Heart right ventricle (tissue), 16 donors: ENCODE measurements at regions of chr2 and their contacts with region 1.

Region 1: DNA sequence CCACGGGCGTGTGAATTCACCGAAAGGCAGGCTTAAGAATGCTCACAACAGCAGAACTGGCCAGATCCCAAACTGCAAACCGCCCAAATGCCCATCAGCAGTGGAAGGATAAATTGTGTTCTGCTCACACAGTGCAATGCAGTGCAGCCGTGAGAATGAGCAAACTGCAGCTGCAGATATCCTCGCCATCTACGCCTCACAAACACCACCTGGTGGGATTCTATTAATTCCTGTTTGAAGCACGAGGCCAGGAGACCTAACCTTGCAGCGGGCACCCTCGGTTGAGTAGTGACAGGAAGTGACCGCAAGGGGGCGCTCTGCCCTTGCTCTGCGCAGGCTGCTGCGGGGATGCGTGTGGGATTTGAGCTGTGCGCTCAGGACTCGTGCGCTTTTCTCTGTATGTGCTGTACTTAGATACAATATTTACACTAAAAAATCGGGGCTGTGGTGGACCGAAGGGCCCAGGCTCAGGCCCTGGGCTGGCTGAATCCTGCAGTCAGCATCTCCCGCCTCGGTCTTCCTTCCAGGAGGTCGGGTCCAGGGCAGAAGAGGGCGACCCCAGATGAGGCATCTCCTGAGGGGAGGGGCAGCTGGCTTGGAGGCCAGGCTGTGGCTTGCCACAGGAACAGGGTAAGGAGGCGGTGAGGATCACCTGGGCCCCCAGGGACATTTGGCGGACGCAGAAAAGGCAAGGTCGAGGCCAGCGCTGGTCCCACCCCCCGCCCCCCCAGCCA is 19.8 kb upstream of the PDIA6 start:
- DNase-seq: peak; percentile 73 to 83
- ATAC-seq: peak; percentile 78 to 91 (median 87)
- H3K4me3 ChIP-seq: no peak overlapping the region
- H3K27ac ChIP-seq: no peak overlapping the region
- H3K4me1 ChIP-seq: peaks cover 0 to 17% (median 7%) of the 10 kb centered on the region in 9 donors
- H3K27me3 ChIP-seq: peaks cover 0 to 59% (median 46%) of the 10 kb centered on the region in 7 donors
- CTCF ChIP-seq: peak; percentile 90 to 100 (median 98)

Region 2: GRCh38 chr2:10777842-10778723 is 54.3 kb before region 1 on chr2:
- intact Hi-C with region 1: no loop called
- DNase-seq: no peak
- ATAC-seq: peak in 5 of 8 donors; percentile 10 to 50 (median 34)
- H3K4me3 ChIP-seq: no peak overlapping the region
- H3K27ac ChIP-seq: peak overlapping the region in 3 of 10 donors; percentile 21 to 44 (median 39)
- H3K4me1 ChIP-seq: peaks cover 0 to 28% (median 17%) of the 10 kb centered on the region in 9 donors
- H3K27me3 ChIP-seq: no peaks in the 10 kb centered on the region
- CTCF ChIP-seq: no peak

Region 3: GRCh38 chr2:10883801-10884478 is 51.6 kb after region 1 on chr2:
- intact Hi-C with region 1: loop called in 1 of 10 experiments (anchors 5 kb)
- DNase-seq: no peak
- ATAC-seq: peak in 5 of 8 donors; percentile 16 to 51 (median 31)
- H3K4me3 ChIP-seq: no peak overlapping the region
- H3K27ac ChIP-seq: no peak overlapping the region
- H3K4me1 ChIP-seq: peaks cover 0 to 29% (median 14%) of the 10 kb centered on the region in 9 donors
- H3K27me3 ChIP-seq: no peaks in the 10 kb centered on the region
- CTCF ChIP-seq: no peak

Region 4: DNA sequence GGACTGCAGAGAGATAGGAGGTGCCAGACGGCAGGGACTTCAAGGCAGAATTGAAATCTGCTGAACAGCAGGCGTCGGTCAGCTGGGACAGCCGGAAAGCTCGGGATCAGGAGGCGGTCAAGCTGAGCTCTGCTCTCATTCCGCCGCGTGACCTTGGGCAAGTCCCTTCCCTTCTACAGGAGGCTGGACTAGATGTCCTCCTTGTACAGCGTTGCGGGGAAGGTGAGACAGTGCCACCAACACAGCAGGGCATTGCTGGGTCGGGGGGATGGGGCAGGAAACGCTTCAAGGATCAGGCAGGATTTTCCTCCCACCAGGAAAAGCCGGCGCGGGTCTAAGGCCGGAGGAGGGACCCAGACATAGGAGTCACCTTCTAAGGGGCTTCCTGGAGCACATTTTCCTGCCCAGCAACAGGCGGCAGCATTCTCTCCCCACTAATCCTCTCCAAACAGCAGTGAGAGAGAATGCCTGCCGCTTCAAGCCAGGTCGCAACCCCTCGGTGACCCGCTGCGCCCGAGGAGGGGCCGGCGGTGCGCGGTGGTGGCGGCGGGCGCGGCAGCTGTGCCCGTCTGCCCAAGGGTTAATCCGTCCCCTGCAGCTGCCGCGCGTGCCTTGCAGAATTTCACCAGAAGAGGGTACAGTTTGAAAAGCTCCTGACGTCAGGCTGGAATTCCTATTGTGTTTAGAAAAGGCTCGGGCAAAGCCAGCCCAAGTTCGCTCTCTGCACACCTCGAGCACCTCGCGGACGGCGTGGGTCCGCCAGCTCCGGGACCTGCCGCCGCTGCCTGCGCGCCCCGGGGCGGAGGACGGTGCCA is 79.1 kb after region 1 on chr2 and contains the start of gene KCNF1:
- intact Hi-C with region 1: loop called in 3 of 10 experiments (anchors 5 to 10 kb)
- DNase-seq: no peak
- ATAC-seq: peak in 2 of 8 donors; percentile 21 to 40
- H3K4me3 ChIP-seq: peak within 1 kb of the TSS in 9 of 10 donors; percentile 27 to 49 (median 41)
- H3K27ac ChIP-seq: no peak within 1 kb of the TSS
- H3K4me1 ChIP-seq: peaks cover 0 to 10% (median 4%) of the 10 kb centered on the region in 9 donors
- H3K27me3 ChIP-seq: peaks cover 0 to 49% (median 39%) of the 10 kb centered on the region in 7 donors
- CTCF ChIP-seq: peak in 5 of 9 donors; percentile 20 to 41 (median 30)
- total RNA-seq, gene KCNF1: 0.10 to 0.42 (median 0.23) TPM in 7 of 10 donors, not detected in the others

Region 5: GRCh38 chr2:11024259-11024645 is 191.9 kb after region 1 on chr2:
- intact Hi-C with region 1: loop called in 5 of 10 experiments (anchors 5 to 10 kb)
- DNase-seq: no peak
- ATAC-seq: peak in 1 of 8 donors; percentile 43
- H3K4me3 ChIP-seq: no peak overlapping the region
- H3K27ac ChIP-seq: no peak overlapping the region
- H3K4me1 ChIP-seq: no peaks in the 10 kb centered on the region
- H3K27me3 ChIP-seq: peaks cover 0 to 15% (median 0%) of the 10 kb centered on the region in 7 donors
- CTCF ChIP-seq: no peak

Region 6: GRCh38 chr2:11124503-11125068 is 292.2 kb after region 1 on chr2:
- intact Hi-C with region 1: loop called (anchors 1 to 5 kb)
- DNase-seq: peak in 1 of 2 donors; percentile 61
- ATAC-seq: peak in 6 of 8 donors; percentile 53 to 75 (median 62)
- H3K4me3 ChIP-seq: no peak overlapping the region
- H3K27ac ChIP-seq: no peak overlapping the region
- H3K4me1 ChIP-seq: peaks cover under 1 to 14% (median 5%) of the 10 kb centered on the region in 9 donors
- H3K27me3 ChIP-seq: peaks cover 0 to 22% (median 7%) of the 10 kb centered on the region in 7 donors
- CTCF ChIP-seq: peak; percentile 51 to 83 (median 72)

Region 7: DNA sequence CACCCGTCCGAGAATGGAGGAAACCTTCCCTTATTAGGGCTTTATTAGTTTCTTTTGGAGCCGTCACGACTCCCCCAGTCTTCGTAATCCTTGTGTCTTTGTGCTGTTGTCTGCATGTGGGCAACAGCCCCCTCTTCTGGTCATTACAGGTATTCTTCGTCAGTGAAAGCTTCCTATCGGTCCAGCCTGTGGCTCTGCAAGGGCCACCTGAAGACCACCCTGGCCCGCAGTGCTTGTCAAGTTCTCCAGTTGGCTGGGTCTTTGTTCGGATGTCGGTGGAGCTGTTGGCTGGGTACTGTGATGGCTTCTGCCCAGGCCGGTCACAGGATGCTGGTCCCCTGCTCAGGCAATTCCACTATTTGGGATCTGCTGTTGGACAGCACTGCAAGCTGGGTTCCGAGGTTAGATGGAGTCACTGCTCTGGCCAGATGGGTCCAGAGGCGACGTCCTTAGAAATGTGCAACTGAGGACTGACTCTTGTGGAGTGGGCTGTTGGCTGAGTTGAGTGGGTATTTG is 614.4 kb after region 1 on chr2:
- intact Hi-C with region 1: loop called in 1 of 10 experiments (anchors 5 kb)
- DNase-seq: peak in 1 of 2 donors; percentile 58
- ATAC-seq: peak; percentile 58 to 83 (median 80)
- H3K4me3 ChIP-seq: no peak overlapping the region
- H3K27ac ChIP-seq: no peak overlapping the region
- H3K4me1 ChIP-seq: no peaks in the 10 kb centered on the region
- H3K27me3 ChIP-seq: no peaks in the 10 kb centered on the region
- CTCF ChIP-seq: peak; percentile 71 to 92 (median 83)

Region 8: GRCh38 chr2:11583840-11584524 is 751.6 kb after region 1 on chr2:
- intact Hi-C with region 1: loop called in 3 of 10 experiments (anchors 5 to 10 kb)
- DNase-seq: peak; percentile 61 to 78
- ATAC-seq: peak; percentile 54 to 83 (median 79)
- H3K4me3 ChIP-seq: no peak overlapping the region
- H3K27ac ChIP-seq: peak overlapping the region in 8 of 10 donors; percentile 3 to 74 (median 56)
- H3K4me1 ChIP-seq: peaks cover 0 to 20% (median 6%) of the 10 kb centered on the region in 9 donors
- H3K27me3 ChIP-seq: no peaks in the 10 kb centered on the region
- CTCF ChIP-seq: peak; percentile 50 to 85 (median 81)